Left cardiac atrium (tissue), 4 donors: ENCODE measurements at regions of chr6 and their contacts with region 1.

Region 1: GRCh38 chr6:27188885-27189418 is 58.5 kb upstream of the PRSS16 start:
- DNase-seq: peak; percentile 70
- ATAC-seq: peak; percentile 94

Region 2: DNA sequence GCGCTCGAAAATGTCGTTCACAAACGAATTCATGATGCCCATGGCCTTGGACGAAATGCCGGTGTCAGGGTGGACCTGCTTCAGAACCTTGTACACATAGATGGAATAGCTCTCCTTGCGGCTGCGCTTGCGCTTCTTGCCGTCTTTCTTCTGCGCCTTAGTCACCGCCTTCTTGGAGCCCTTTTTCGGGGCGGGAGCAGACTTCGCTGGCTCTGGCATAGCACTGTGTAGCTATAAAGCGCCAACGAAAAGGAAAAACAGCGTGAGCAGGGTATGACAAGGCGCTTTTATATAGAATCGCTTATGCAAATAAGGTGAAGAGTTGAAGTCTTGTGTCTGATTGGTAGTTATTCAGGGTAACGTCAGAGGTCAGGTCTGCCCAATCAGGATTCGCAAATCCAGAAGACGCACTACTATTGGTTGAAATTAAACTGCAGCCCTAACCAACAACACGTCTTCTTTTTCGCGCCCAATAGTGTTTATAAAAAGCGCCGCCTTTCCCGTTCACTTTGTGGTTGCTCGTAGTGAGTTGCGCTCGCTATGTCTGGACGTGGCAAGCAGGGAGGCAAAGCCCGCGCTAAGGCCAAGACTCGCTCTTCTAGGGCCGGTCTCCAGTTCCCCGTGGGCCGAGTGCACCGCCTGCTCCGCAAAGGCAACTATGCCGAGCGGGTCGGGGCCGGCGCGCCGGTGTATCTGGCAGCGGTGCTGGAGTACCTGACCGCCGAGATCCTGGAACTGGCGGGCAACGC is 56.2 kb before region 1 on chr6:
- intact Hi-C with region 1: no loop called
- DNase-seq: peak; percentile 86
- ATAC-seq: peak; percentile 95 to 96

Region 3: GRCh38 chr6:27472617-27473400 is 283.9 kb after region 1 on chr6 and contains the start of gene ZNF184:
- intact Hi-C with region 1: loop called (anchors 10 kb)
- DNase-seq: peak; percentile 96
- ATAC-seq: peak; percentile 99 to 100
- total RNA-seq, gene ZNF184: 3.5 to 4.3 TPM

Region 4: DNA sequence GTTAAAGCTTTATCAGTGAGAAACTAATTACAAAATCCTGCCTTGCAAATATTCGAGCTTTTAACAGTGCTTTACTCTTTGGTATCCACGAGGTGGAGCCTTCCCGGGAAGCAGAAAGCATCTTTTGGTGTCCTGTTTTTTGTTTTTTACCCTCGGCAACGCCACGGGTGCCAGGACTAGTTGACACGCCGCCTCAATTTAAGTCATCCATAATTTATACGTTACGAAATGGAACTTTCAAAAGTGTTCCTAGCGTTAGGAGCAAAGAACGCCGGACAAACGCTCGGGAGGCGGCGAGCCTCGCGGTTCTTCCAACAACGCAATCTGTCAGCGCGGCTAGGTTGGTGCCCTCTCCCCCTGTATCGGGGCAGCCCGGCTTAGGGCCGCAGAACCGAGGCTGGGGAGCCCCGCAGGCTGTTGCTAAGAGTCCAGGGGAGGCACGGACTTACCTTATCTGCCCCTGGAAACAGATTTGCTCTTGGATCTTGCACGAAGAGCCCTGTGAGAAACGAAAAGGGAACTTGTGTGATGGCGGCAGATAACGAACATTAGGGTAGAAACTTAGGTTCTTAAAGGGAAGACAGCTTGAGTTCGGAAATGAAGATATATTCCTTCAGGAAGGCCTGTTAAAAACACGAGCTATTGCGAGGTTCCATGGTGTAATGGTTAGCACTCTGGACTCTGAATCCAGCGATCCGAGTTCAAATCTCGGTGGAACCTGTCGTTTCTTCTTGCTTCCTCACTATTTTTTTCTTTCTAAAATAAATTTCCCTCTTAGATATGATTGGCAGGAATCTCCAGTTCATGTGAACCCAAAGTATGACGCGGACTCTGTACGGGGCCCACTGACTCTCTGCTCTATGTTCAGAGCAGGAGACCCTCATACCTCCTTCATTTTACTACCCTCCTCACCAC is 330.2 kb after region 1 on chr6:
- intact Hi-C with region 1: loop called in 1 of 2 experiments (anchors 10 kb)
- DNase-seq: peak; percentile 57
- ATAC-seq: peak; percentile 91 to 96

Region 5: GRCh38 chr6:27753668-27754407 is 564.9 kb after region 1 on chr6:
- intact Hi-C with region 1: loop called in 1 of 2 experiments (anchors 5 kb)
- DNase-seq: peak; percentile 79
- ATAC-seq: peak; percentile 56 to 77